HEK293 (cell line): ENCODE measurements at regions of chr6 and their contacts with region 1.

Region 1: DNA sequence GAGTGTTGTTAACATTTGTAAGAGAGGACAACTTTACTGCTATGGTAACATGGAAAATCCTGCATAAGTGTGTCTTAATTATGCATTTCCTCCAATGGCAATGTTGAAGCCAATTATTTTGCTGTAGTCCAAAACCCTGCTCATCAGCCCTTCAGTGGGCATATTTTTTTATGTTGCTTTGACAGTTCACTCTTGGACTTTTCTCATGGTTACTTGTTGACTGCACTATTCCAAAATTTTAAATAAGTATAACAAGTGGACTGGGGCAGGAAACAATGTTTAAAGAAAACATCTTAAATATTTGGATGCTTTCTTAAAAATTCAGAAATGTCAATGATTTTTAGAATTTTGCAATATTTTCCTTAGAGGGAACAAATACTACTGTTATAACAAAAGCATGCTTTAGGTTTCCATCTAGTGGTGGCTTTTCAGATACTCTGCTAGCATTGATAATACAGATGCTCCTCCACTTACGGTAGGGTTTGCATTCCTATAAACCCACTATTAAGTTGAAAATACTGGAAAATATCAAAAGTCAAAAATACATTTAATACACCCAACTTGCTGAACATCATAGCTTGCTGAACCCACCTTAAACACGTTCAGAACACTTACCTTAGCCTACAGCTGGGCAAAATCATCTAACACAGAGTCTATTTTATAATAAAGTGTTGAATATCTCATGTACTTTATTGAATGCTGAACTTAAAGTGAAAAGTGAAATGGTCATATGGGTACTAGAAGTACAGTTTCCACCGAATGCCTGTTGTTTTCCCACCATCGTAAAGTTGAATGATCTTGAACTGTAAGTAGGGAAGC is 86.4 kb downstream of the ADGRG6 start:
- H3K4me3 ChIP-seq: no peak overlapping the region
- H3K27ac ChIP-seq: no peak overlapping the region
- H3K4me1 ChIP-seq: peaks cover 6% of the 10 kb centered on the region; the same call in 1 of the 2 replicates
- CTCF ChIP-seq: no peak; the same call in 1 of the 2 replicates

Region 2: DNA sequence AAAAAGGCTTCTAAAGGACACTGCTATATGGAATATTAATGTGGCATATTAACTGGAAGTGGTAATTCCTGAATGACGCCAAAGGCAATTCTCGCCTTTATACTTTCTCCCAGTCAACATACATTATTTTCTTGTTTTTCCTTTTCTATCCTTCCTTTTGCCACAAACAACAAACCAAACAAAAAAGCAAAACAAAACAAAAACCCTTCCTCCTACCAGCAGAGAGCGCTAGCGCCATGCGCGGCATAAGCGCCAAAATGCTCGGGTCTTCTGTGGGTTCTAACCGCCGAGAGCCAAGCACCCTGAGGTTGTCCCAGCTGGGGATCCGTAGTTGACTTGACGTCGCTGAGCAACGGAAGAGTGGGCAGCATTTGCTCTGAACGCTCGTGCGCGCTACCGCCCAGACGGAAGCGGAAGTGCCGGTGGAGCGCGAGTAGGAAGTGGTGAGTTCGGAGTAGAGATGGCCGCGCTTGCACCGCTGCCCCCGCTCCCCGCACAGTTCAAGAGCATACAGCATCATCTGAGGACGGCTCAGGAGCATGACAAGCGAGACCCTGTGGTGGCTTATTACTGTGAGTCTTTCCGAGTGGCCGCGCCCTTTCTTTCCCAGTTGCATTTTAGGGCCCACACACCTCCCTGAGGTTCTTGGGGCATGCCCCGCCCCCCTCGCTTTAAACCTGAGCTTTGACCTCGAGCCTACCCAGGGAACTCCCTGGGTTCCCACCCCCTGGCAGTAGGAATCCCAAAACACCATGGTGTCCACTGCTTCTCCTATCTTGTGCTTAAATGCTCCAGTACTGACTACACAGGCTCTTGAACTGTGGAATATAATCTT is 241.2 kb before region 1 on chr6 and contains the starts of genes NMBR and VTA1:
- CTCF ChIA-PET with region 1: interaction called, 21 read pairs
- POLR2A ChIA-PET with region 1: no interaction called
- H3K4me3 ChIP-seq: peak within 1 kb of the TSS; percentile 82
- H3K27ac ChIP-seq: no peak within 1 kb of the TSS; the same call in 1 of the 2 replicates
- H3K4me1 ChIP-seq: 0 out of 2 replicates have a peak, but pooled peaks cover 3% of the 10 kb centered on the region
- CTCF ChIP-seq: peak; percentile 97

Region 3: GRCh38 chr6:142236691-142237090 is 151.5 kb before region 1 on chr6:
- CTCF ChIA-PET with region 1: interaction called, 15 read pairs
- POLR2A ChIA-PET with region 1: interaction called, 3 read pairs
- H3K4me3 ChIP-seq: no peak overlapping the region
- H3K27ac ChIP-seq: no peak overlapping the region
- H3K4me1 ChIP-seq: no peaks in the 10 kb centered on the region
- CTCF ChIP-seq: no peak

Region 4: DNA sequence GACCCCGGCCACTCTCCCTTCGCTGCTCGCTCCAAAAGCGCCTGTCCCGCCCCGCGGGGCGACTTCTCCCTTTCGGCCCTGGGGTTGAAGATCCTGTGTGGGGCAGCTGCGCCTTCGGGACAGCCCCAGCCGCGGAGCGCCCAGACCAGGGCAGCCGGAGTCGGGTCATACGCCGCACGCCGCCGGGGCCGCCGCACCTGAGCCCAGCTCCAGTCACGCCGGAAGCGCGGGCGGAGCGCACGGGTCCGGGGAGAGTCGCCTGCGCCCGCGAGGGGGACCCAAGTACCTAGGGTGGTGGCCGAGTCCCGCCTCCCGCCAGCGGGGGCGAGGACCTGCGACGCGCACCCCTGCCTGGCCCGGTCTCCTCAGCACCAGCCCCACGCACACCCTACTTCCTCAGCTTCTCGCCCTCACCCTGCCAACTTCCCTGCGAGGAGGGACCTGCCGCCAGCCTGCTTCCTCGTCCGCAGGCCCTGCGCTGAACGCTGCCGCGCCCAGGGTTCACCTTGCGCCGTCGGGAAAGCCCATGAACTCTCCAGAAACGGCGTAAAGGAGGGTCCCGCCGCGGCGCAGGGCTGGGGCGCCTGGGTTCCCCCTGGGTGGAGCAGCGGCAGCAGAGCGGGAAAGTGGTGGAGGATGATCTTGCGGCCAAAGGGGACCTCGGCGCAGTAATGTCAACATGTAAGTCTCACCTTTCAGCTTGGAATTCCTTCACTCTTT is 86.4 kb before region 1 on chr6 and contains the start of gene ADGRG6:
- CTCF ChIA-PET with region 1: interaction called, 23 read pairs
- POLR2A ChIA-PET with region 1: no interaction called
- H3K4me3 ChIP-seq: peak within 1 kb of the TSS; percentile 54
- H3K27ac ChIP-seq: peak within 1 kb of the TSS; percentile 79; the same call in 1 of the 2 replicates
- H3K4me1 ChIP-seq: peaks cover 11% of the 10 kb centered on the region
- CTCF ChIP-seq: peak; percentile 94

Region 5: DNA sequence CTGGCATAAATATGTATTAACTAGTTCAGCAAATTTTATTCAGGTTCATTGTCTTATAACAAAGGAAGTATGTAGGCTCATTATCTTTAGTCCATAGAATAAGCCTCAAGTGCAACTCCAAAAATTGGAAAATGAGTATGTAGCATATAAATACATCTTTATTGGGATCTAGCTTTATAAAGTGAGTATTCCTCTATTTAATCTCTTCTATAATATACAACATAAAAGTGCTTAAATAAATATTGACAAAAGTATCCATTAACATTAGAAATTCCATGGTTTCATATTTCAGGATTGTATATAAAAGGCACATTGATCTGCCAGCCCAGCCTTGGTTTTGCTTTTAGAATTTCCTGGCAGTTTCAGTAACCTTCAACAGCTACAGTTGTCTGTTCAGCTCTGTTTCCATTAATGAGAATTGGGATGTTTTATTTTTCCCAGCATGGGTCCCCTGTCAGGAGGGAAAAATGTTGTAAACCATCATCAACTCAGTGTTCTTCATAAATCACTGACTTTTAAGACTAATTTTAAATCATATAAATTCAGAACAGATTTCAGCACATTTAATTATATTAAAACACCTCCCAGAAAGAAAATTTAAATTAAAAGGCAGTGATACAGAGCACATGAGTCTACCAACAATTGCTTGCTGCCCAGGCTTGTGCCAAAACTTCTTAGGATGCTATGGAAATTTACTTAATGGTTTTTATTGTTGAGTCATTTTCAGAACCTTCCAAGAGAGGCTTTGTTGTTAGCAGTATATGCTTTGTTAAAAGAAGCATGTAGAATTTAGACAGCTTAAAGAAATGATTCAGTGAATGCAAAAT is 33.3 kb after region 1 on chr6:
- CTCF ChIA-PET with region 1: interaction called, 11 read pairs
- POLR2A ChIA-PET with region 1: no interaction called
- H3K4me3 ChIP-seq: no peak overlapping the region
- H3K27ac ChIP-seq: no peak overlapping the region
- H3K4me1 ChIP-seq: peaks cover 2% of the 10 kb centered on the region; the same call in 1 of the 2 replicates
- CTCF ChIP-seq: no peak